KBM-7 (cell line): ENCODE measurements at regions of chr16 and their contacts with region 1.

Region 1: GRCh38 chr16:10944249-10945064 is at the start of gene CLEC16A:
- DNase-seq: peak; percentile 95

Region 2: GRCh38 chr16:10541366-10541765 is 403.1 kb before region 1 on chr16:
- in situ Hi-C with region 1: loop called (anchors 25 kb)
- DNase-seq: no peak

Region 3: GRCh38 chr16:11145173-11145818 is 200.8 kb after region 1 on chr16:
- in situ Hi-C with region 1: no loop called
- DNase-seq: no peak